SK-N-SH (cell line): ENCODE measurements at regions of chr11 and their contacts with region 1.

Region 1: DNA sequence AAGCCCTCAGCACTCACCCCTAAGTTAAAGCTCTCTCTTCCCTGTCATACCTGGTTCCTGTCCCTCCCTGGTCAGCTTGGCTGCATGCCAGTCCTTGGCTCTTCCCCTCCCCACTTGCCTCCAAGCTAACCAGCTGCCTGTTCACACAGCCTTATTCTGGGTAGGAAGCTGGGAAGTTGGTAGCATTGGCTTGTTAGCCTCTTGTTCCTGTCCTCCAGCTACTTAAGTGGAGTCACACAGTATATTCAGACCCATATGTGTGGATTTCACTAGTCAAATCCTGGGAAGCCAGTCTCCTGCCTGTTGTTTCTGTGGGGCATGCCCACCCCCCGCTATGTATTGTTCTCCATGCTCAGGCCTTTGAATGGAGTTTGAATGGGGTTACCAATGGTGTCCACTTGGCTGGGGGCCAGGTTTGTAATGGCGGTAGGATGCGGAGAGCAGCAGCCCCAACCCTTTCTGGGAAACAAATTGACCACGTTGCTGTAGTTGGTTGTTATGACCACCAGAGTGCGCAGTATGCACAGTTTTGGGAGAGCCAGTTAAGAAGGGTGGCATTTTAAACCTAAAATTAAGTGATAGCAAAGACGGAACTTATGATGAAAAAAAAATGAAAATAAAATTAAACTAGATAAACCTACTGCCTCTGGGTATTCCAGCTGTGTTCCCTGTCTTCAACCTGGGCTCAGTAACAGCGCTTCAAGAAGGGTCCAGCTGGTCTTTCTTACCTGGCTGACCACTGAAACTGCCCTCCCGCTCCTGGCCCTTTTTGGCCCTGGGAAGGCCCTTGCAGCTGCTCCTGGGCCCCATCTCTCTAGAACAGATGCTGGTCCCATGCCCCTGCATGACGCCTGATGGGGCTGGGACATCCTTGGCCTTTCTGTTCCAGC is 10.7 kb upstream of the RPS3 start:
- DNase-seq: peak; percentile 85
- H3K4me3 ChIP-seq: peak overlapping the region in 1 of 2 experiments; percentile 35; a peak in 1 of 4 replicates
- H3K27ac ChIP-seq: no peak overlapping the region
- H3K4me1 ChIP-seq: peaks cover 0 to 9% of the 10 kb centered on the region in 2 experiments; a peak in 1 of 4 replicates
- H3K27me3 ChIP-seq: no peaks in the 10 kb centered on the region
- CTCF ChIP-seq: peak; percentile 89
- EP300 ChIP-seq: no peak
- RAD21 ChIP-seq: peak; percentile 91

Region 2: DNA sequence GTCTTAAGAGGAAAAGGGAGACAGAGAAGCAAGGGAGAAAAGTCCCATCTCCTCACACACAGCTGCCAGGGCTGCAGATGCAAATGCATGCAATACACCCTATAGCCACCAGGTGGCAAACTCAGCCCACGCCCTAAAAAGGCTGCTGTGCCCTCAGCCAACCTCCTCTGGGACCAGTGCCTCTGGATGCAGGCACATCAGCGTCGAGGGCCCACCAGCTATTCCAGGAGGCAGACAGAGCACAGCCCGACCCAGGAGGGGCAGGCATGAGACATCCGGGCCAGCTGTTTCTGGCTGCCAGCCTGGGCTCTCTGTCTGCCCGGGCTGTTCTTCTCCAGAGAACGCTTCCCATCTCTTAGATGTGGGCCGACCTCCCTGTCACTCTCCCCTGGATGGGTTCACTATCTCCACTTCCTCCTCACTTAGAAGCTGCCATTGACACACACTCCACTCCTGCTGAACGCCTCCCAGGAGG is 108.4 kb before region 1 on chr11:
- CTCF ChIA-PET with region 1: interaction called, 701 read pairs
- POLR2A ChIA-PET with region 1: interaction called, 3 read pairs
- DNase-seq: peak; percentile 95
- H3K4me3 ChIP-seq: peak overlapping the region in 1 of 2 experiments; percentile 18; a peak in 1 of 4 replicates
- H3K27ac ChIP-seq: peak overlapping the region in 1 of 2 experiments; percentile 62; a peak in 2 of 4 replicates
- H3K4me1 ChIP-seq: peaks cover 0 to 19% of the 10 kb centered on the region in 2 experiments; a peak in 1 of 4 replicates
- H3K27me3 ChIP-seq: no peaks in the 10 kb centered on the region
- CTCF ChIP-seq: peak; percentile 89
- EP300 ChIP-seq: no peak
- RAD21 ChIP-seq: peak; percentile 99

Region 3: GRCh38 chr11:75342903-75343870 is 45.4 kb before region 1 on chr11:
- CTCF ChIA-PET with region 1: interaction called, 39 read pairs
- POLR2A ChIA-PET with region 1: no interaction called
- DNase-seq: no peak
- H3K4me3 ChIP-seq: no peak overlapping the region
- H3K27ac ChIP-seq: no peak overlapping the region; a peak in 1 of 4 replicates
- H3K4me1 ChIP-seq: peaks cover 52 to 75% of the 10 kb centered on the region in 2 experiments
- H3K27me3 ChIP-seq: no peaks in the 10 kb centered on the region
- CTCF ChIP-seq: no peak
- EP300 ChIP-seq: peak in 1 of 2 experiments; percentile 19; a peak in 1 of 4 replicates
- RAD21 ChIP-seq: no peak

Region 4: DNA sequence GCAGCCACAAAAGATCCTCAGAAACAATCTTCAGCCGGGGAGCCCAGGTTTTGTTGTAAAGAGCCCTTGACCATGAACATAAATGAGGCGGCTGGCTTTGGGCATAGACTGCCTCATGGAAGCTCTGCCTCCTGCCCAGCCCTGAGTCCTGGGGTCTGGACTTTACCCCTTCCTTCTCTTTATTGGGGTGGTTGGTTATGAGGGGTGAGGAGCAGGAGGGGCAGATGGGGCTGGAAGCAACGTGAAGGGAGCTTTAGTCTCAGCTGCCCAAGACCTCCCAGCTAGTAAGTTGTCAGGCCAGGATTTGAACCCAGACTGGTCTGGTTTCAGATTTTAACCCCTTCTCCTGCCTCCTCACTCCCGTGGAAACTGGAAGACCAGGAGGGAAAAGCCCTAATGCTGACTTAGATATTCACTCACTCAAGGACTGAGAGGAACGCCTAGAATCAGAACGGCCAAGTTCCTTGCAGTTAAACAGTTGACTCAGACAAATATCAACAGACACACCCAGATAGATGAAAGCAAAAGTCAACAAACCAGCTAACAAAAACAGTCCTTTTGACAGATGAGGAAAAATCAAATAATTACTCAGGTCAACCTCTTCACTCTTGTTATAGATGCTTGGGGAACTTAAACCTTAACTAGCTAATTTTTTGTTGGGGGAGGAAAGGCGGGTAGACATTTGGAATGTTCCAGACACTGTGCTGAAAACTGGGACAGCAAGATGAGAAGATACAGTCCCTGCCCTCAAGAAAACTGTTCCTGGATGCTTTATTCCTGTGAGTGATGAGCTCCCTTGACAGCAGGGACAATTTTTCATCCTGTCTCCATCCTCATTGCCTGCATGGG is 16.5 kb before region 1 on chr11:
- CTCF ChIA-PET with region 1: interaction called, 44 read pairs
- POLR2A ChIA-PET with region 1: no interaction called
- DNase-seq: no peak
- H3K4me3 ChIP-seq: no peak overlapping the region
- H3K27ac ChIP-seq: no peak overlapping the region
- H3K4me1 ChIP-seq: no peaks in the 10 kb centered on the region
- H3K27me3 ChIP-seq: no peaks in the 10 kb centered on the region
- CTCF ChIP-seq: no peak
- EP300 ChIP-seq: no peak
- RAD21 ChIP-seq: no peak

Region 5: DNA sequence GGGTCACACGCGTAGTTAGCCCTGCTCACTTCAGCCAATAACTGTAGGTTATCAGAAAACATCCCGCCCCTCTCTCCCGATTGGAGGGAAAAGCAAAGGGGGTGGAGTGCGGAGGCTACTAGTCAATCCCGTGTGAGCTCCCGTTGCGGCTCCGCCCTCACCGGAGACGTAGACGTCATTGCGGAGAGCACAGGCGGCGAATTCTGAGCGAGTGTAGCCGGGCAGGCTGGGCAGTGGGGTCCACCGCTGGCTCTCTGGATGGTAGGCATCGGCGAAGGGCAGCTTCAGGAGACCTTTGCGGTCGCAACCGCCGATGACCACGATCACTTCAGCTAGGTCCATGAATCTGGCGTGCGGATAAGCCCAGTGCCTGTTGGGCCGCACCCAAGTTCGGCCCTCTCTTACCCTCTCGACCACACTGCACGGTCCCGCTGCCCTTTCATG is 39.7 kb after region 1 on chr11:
- CTCF ChIA-PET with region 1: interaction called, 41 read pairs
- POLR2A ChIA-PET with region 1: interaction called, 3 read pairs
- DNase-seq: peak; percentile 99
- H3K4me3 ChIP-seq: peak overlapping the region; percentile 54 to 55; a peak in 3 of 4 replicates
- H3K27ac ChIP-seq: peak overlapping the region in 1 of 2 experiments; percentile 53; a peak in 1 of 4 replicates
- H3K4me1 ChIP-seq: peaks cover 0 to 21% of the 10 kb centered on the region in 2 experiments; a peak in 1 of 4 replicates
- H3K27me3 ChIP-seq: peaks cover 9% of the 10 kb centered on the region
- CTCF ChIP-seq: no peak
- EP300 ChIP-seq: no peak
- RAD21 ChIP-seq: no peak

Region 6: DNA sequence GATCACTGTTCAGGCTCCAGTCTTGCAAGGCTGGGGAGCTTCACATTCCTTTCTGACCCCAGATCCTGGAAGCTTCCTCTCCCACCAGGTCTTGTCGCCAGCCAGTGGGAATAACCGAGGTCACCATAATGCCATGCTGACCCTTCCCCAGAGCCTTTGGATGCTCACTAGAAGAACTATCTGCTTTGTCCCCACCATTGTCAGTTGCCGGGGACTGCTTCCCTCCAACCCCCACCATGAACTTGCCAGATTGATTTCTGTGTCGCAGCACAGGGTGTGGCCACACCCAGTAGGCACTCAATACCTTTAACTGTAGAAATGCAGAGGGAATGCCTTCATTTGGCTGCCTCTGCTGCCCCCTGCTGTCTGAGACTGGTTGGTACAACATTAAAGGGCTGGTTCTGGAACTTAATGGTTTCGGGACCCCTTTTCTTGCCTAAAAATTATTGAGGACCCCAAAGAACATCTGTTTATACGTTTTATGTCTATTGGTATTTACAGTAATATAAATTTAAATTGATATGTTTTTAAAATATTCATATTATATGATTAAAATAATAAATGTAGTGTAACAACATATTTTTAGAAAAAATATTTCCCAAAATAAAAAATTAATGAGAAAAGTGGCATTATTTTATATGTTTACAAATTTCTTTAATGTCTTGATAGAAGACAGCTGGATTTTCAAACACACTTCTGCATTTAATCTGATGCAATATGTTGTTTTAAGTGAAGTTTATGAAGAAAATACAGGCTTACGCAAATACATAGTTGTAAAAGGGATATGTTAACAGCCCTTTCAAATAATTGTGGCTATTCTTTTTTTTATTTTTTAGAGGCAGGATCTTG is 143.8 kb after region 1 on chr11:
- CTCF ChIA-PET with region 1: interaction called, 51 read pairs
- POLR2A ChIA-PET with region 1: no interaction called
- DNase-seq: peak; percentile 71
- H3K4me3 ChIP-seq: no peak overlapping the region
- H3K27ac ChIP-seq: no peak overlapping the region
- H3K4me1 ChIP-seq: no peaks in the 10 kb centered on the region
- H3K27me3 ChIP-seq: no peaks in the 10 kb centered on the region
- CTCF ChIP-seq: peak; percentile 89
- EP300 ChIP-seq: no peak
- RAD21 ChIP-seq: peak; percentile 94